Mammary epithelial cell (primary cell): ENCODE measurements at regions of chr20 and their contacts with region 1.

Region 1: DNA sequence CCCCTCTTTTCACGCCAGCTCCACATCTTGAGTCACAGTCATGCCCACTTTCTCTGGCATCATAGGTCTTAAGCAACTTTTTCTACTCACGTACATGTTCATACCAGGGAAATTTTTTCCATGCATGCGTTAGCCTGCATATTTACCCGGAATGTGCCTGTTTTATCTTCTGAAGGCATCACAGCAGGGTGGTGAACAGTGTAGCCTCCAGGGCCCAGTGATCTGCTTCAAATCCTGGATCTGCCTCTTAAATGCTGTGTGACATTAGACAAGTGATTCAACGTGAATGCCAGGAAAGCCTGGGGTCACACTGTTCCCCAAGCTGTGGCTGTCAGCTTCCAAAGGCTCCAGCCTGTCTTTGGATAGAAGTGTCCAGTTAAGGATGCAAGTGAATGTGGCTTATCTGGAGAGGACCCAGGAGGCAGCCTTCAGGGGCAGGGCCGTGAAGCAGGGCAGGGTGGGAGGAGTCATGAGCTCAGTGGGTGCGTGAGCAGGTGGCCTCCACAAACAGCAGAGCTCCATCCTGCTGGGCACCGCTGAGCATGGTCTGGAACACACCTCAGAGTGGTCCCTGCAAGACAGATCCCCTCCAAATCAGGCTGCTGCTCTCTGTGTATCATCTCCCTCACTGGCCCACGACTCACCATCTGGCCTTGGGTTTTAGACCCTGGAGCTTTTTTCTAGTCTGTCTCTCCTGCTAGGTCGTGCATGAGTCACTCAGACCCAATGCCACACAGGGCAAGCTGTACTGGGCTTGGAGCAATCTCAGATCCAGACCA is 30.4 kb upstream of the CD93 start:
- DNase-seq: peak; percentile 47
- H3K4me3 ChIP-seq: no peak overlapping the region
- H3K27ac ChIP-seq: no peak overlapping the region
- H3K4me1 ChIP-seq: peaks cover 5% of the 10 kb centered on the region
- H3K27me3 ChIP-seq: no peaks in the 10 kb centered on the region
- CTCF ChIP-seq: no peak

Region 2: DNA sequence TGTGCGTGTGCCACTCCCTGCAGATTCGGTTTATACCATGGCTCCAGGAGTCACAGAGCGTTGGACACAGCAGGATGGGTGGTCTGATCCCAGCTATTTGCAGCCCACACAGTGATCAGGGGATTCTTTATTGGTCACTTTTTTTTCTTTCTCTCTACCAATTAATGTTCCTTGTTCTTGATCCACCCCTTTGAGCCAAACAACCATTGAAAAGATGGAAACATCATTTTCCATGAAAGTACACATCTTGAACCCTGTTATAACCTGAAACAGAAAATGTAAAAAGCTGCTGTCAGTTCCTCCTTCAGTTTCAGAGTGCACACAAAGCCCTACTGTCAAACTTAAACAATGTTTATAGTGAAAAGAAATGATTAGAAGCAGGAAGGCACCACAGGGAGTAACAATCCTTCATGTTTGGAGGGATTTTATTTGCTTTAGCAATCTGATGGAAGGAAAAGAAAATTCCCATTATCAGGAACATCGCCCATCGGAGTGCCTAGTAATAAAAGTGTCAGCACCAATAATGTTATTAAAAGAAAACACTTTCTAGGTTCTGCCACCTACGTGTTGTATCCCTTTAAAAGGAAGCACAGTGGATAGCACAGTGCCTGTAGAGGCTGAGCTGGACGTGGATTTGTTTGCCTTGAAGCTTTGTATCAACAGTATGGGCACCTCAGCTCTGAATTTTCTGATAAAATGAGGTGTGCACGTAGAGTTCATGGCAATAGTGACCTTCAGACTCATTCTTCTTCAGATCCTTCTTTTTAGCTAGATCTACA is 51.0 kb before region 1 on chr20:
- CTCF ChIA-PET with region 1: no interaction called
- dilution Hi-C with region 1: loop called (anchors 5 kb)
- in situ Hi-C with region 1: no loop called
- intact Hi-C with region 1: no loop called
- DNase-seq: no peak
- H3K4me3 ChIP-seq: no peak overlapping the region
- H3K27ac ChIP-seq: no peak overlapping the region
- H3K4me1 ChIP-seq: no peaks in the 10 kb centered on the region
- H3K27me3 ChIP-seq: no peaks in the 10 kb centered on the region
- CTCF ChIP-seq: no peak

Region 3: GRCh38 chr20:23099791-23100698 is 16.5 kb before region 1 on chr20:
- CTCF ChIA-PET with region 1: interaction called, 24 read pairs
- dilution Hi-C with region 1: no loop called
- in situ Hi-C with region 1: no loop called
- intact Hi-C with region 1: no loop called
- DNase-seq: peak; percentile 98
- H3K4me3 ChIP-seq: no peak overlapping the region
- H3K27ac ChIP-seq: no peak overlapping the region
- H3K4me1 ChIP-seq: peaks cover 37% of the 10 kb centered on the region
- H3K27me3 ChIP-seq: no peaks in the 10 kb centered on the region
- CTCF ChIP-seq: no peak